ENCODE measurements at regions of chr16 and their contacts with region 1.

Region 1: GRCh38 chr16:11535471-11535870 is 51.2 kb downstream of the LITAF start:
- DNase-seq: no peak
- H3K4me3 ChIP-seq: no peak overlapping the region
- H3K27ac ChIP-seq: no peak overlapping the region
- H3K4me1 ChIP-seq: peaks cover 0 to 3% (median 0%) of the 10 kb centered on the region in 4 experiments; a peak in 4 of 7 replicates
- H3K27me3 ChIP-seq: no peaks in the 10 kb centered on the region
- CTCF ChIP-seq: no peak
- EP300 ChIP-seq: no peak
- POLR2A ChIP-seq: no peak
- RAD21 ChIP-seq: no peak

Region 2: GRCh38 chr16:11181899-11182279 is 353.6 kb before region 1 on chr16:
- CTCF ChIA-PET with region 1: no interaction called
- POLR2A ChIA-PET with region 1: no interaction called
- DNase-seq: no peak
- H3K4me3 ChIP-seq: no peak overlapping the region
- H3K27ac ChIP-seq: no peak overlapping the region
- H3K4me1 ChIP-seq: peaks cover 3 to 17% (median 10%) of the 10 kb centered on the region in 4 experiments
- H3K27me3 ChIP-seq: no peaks in the 10 kb centered on the region
- CTCF ChIP-seq: no peak
- EP300 ChIP-seq: no peak
- POLR2A ChIP-seq: no peak
- RAD21 ChIP-seq: no peak

Region 3: DNA sequence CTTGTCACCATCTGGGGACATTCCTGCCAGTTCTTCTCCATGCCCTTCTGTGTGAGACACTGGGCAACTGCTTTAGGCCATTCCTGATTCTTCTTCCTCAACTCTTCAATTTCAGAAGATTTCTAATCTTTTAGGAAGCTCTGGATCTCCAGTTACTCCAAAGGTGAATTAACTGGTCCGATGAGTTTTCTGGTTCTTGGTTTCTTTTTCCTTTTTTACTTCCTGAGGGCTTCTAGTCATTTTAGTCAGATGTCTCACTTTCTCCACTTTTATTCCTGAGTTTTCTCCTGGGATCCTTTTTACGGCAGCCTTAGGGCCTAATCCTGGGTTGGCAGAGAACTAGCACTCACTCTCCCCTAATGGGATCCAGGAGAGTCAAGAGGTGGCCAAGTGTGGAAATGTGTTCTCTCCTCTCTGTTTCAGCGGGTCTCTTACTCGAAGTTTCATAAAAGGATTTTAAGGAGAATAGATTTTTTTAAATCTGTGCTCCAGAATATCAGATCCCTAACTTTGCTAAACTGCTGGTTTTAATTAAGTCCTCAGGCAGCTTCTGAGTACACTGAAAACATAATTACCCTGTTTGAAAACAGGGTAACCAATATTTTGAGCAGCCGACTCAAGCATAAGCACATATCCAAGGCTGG is 82.6 kb before region 1 on chr16:
- CTCF ChIA-PET with region 1: no interaction called
- POLR2A ChIA-PET with region 1: no interaction called
- DNase-seq: no peak
- H3K4me3 ChIP-seq: no peak overlapping the region
- H3K27ac ChIP-seq: no peak overlapping the region
- H3K4me1 ChIP-seq: no peaks in the 10 kb centered on the region
- H3K27me3 ChIP-seq: no peaks in the 10 kb centered on the region
- CTCF ChIP-seq: no peak
- EP300 ChIP-seq: no peak
- POLR2A ChIP-seq: no peak
- RAD21 ChIP-seq: no peak

Region 4: GRCh38 chr16:11485676-11486075 is 49.8 kb before region 1 on chr16:
- CTCF ChIA-PET with region 1: no interaction called
- POLR2A ChIA-PET with region 1: no interaction called
- DNase-seq: no peak
- H3K4me3 ChIP-seq: no peak overlapping the region
- H3K27ac ChIP-seq: no peak overlapping the region
- H3K4me1 ChIP-seq: no peaks in the 10 kb centered on the region
- H3K27me3 ChIP-seq: no peaks in the 10 kb centered on the region
- CTCF ChIP-seq: no peak
- EP300 ChIP-seq: no peak
- POLR2A ChIP-seq: no peak
- RAD21 ChIP-seq: no peak

Region 5: GRCh38 chr16:11499295-11500089 is 36.0 kb before region 1 on chr16:
- CTCF ChIA-PET with region 1: interaction called, 11 read pairs
- POLR2A ChIA-PET with region 1: interaction called, 6 read pairs
- DNase-seq: peak in 1 of 2 experiments; percentile 52
- H3K4me3 ChIP-seq: no peak overlapping the region
- H3K27ac ChIP-seq: no peak overlapping the region
- H3K4me1 ChIP-seq: peaks cover 2 to 40% (median 29%) of the 10 kb centered on the region in 4 experiments
- H3K27me3 ChIP-seq: no peaks in the 10 kb centered on the region
- CTCF ChIP-seq: no peak
- EP300 ChIP-seq: no peak
- POLR2A ChIP-seq: no peak
- RAD21 ChIP-seq: no peak

Region 6: DNA sequence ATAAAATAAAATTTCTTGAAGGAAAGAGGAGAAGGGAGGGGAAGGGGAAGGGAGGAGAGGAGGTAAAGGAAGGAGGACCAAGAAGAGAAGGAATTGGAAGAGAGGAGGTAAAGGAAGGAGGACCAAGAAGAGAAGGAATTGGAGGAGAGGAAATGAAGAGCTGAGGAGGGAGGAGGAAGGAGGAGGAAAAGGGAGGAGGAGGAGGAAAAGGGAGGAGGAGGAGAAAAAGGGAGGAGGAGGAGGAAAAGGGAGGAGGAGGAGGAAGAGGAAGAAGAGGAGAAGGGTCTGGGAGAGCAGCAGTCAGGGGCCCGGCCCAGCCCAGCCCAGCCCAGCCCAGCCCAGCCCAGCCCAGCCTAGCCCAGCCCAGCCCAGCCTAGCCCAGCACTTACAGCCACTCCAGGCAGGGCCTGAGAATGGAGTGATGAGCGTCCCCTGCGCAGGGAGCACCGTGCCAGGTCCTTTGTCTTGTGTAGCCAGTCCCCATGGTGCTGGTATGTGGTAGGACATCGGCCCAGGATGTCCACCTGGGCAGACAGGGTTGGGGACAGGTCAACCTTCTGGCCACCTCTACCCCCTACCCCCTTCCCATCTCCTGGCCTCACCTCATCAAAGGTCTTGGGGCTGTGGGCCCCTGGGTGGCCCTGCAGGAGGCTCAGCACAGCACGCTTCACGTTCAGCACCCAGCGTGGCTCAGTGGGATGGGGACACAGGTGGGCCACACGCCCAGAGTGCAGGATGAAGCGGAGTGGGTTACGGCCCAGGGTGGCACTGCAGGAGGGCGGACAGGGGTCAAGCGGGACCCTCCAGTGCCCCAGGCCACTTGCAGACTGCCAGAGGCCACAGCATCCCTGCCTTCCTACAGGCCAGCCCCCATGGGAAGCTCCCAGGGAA is 19.7 kb before region 1 on chr16:
- CTCF ChIA-PET with region 1: interaction called, 55 read pairs
- POLR2A ChIA-PET with region 1: interaction called, 6 read pairs
- DNase-seq: no peak
- H3K4me3 ChIP-seq: no peak overlapping the region
- H3K27ac ChIP-seq: no peak overlapping the region
- H3K4me1 ChIP-seq: peaks cover 0 to 13% (median 4%) of the 10 kb centered on the region in 4 experiments; a peak in 5 of 7 replicates
- H3K27me3 ChIP-seq: no peaks in the 10 kb centered on the region
- CTCF ChIP-seq: no peak
- EP300 ChIP-seq: no peak
- POLR2A ChIP-seq: no peak
- RAD21 ChIP-seq: no peak

Region 7: DNA sequence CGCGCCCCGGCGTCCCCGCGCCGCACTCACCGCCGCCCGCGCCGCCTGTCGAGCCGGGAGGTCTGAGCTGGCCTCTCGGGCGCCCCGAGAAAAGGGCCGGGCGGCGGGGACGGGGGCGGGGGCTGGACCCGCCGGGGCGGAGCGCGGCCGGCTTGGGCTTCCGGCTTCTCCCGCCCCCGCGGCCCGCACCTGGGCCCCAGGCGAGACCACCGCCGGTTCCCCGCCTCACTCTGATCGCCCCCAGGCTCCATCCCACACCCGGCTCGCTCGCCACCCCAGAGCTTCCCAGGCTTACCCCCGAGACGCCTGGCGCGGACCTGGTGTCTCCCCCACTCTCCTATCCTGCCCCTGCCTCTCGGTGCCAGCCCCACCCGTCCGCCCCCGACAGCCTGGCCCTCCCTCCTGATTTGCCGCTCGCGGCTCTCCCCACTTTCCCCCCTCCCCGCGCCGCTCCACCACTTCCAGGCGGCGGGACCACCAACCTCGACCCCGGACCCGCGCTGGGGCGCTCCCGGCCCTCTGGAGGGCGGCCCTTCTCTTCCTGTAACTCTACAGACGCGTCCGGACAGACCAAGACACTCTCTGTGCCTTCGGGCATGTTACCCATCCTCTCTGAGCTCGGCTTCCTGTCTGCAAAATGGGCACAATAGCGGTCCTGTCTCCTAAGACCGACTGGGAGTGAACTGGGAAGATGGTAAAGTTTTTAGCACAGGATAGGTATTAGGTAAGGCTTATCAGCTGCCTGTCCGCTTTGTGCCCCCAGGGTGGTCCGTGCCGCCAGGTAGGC is 51.6 kb after region 1 on chr16 and contains the start of gene LITAF:
- CTCF ChIA-PET with region 1: interaction called, 24 read pairs
- POLR2A ChIA-PET with region 1: interaction called, 5 read pairs
- DNase-seq: peak; percentile 9 to 79
- H3K4me3 ChIP-seq: peak within 1 kb of the TSS; percentile 49 to 87 (median 63)
- H3K27ac ChIP-seq: no peak within 1 kb of the TSS; the same call in 1 of the 2 replicates
- H3K4me1 ChIP-seq: peaks cover 12 to 29% (median 25%) of the 10 kb centered on the region in 4 experiments
- H3K27me3 ChIP-seq: peaks cover 4 to 21% (median 13%) of the 10 kb centered on the region in 4 experiments
- CTCF ChIP-seq: peak in 1 of 3 experiments; percentile 22; a peak in 1 of 4 replicates
- EP300 ChIP-seq: no peak
- POLR2A ChIP-seq: no peak
- RAD21 ChIP-seq: peak; percentile 46 to 49; a peak in 3 of 4 replicates
- total RNA-seq, gene LITAF: 160 and 165 TPM in 2 replicates

Region 8: DNA sequence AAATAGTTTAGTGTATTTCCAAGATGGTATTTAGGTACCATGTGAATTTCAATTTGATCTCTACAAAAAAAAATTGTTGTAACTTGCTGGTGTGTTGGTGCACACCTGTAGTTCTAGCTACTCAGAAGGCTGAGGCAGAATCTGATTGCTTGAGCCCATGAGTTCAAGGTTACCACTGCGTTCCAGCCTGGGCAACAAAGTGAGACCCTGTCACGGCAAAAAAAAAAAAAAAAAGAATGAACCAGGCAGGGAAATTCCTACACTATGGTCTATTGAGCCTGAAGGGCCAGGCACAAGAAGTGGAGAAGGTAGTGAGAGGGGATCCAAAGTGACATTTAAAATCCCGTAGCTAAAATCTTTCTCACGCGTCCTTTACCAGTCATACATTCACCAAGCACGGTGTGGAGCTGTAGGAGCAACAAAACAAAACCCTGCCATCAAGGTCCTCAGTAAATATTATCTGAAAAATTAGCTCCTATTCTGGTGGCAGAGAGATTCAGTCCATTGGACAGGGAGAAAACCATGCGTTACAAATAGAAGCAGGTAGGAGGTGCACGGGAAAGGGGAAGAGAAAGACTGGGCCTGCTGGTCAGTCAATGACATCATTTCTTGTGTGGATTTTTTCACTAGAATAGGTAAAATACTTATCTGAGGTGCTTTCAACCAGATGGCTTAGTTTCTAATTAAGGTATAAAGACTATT is 179.9 kb after region 1 on chr16:
- CTCF ChIA-PET with region 1: interaction called, 36 read pairs
- POLR2A ChIA-PET with region 1: no interaction called
- DNase-seq: no peak
- H3K4me3 ChIP-seq: no peak overlapping the region
- H3K27ac ChIP-seq: no peak overlapping the region
- H3K4me1 ChIP-seq: no peaks in the 10 kb centered on the region
- H3K27me3 ChIP-seq: no peaks in the 10 kb centered on the region
- CTCF ChIP-seq: no peak
- EP300 ChIP-seq: no peak
- POLR2A ChIP-seq: no peak
- RAD21 ChIP-seq: no peak